ENCODE measurements at regions of chr20 and their contacts with region 1.

Region 1: DNA sequence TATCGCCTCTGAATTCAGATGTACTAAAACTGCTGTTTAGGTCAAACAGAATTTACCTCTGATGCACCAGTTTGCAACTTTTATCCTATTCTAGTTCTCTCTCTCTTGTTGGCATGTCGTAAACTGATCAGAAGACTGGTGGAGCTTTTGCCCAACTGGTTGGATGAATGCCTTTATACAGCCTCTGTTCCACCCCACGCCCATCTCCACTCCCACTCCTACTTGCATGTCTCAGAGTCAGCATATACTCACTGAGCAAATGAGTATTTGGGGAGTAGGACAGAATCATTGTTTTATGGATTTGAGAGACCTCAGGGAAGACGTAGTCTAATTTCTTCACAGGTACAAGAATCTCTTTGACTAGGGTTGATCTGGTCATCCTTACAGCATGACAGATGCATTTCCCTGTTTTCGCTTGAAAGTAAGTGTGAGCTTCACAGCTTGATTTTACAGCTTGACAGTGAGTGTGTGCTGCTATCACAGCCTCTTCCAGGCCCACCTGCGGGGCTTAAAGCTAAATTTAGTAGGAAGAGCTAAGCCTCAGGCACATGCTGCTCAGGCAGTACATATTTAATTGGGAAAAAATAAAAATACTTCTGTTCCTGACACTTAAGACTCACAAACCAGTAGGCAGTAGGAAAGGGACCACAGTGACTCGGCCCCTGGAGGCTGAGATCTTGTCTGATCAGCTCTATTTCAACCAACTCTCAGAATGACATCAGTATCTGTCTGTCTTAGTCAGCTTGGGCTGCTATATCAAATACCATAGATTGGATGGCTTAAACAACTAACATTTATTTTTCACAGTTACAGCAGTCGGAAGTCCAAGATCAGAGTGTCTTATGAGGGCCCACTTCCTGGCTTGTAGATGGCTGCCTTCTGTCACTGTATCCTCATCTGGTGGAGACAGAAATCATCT is 30.4 kb downstream of the TRMT6 start:
- DNase-seq: no peak
- ATAC-seq: no peak
- H3K4me3 ChIP-seq: no peak overlapping the region
- H3K27ac ChIP-seq: no peak overlapping the region
- H3K4me1 ChIP-seq: peaks cover 0 to 10% (median 0%) of the 10 kb centered on the region in 12 donors
- H3K27me3 ChIP-seq: peaks cover 0 to 4% (median 0%) of the 10 kb centered on the region in 9 donors
- CTCF ChIP-seq: no peak
- POLR2A ChIP-seq: no peak

Region 2: GRCh38 chr20:5796331-5797040 is 123.4 kb before region 1 on chr20:
- intact Hi-C with region 1: no loop called
- DNase-seq: no peak
- ATAC-seq: no peak
- H3K4me3 ChIP-seq: no peak overlapping the region
- H3K27ac ChIP-seq: no peak overlapping the region
- H3K4me1 ChIP-seq: no peaks in the 10 kb centered on the region
- H3K27me3 ChIP-seq: no peaks in the 10 kb centered on the region
- CTCF ChIP-seq: no peak
- POLR2A ChIP-seq: no peak

Region 3: DNA sequence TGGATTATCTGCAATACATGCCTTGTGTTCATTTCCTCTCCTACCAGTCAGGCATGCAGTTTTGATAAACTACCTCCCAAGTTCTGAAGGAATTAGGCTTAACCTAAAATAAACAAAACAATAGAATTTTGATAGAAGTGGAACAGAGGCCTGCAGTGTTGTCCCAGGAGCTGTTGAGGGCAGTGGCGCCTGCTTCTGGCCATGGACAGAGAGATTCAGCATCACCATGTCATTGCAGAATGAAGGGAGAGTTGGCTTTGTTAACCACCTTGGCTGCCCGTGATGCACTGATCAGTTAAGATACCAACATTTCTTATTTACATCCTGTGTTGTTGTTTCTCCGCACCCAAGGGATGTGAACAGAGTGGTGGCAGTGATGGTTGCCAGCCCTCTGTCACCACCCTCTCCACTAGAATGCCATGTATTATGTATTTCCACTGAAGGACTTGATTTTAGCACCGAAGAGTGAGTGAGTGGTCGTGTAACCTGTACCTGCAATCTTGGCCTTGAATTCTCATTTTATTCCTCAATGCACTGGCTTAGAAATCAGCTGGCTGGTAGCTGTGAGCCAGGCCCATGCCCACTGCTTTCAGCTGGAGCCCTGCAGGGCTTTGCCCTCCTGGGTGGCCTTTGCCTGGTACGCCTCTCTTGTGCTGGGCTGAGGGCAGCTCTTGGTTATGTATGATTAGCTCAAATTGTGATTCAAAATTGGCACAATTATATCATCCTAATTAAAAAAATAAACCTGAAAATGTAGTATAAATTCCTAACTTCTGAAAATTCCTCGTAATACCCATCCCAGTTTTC is 113.2 kb before region 1 on chr20:
- intact Hi-C with region 1: loop called in 1 of 10 experiments (anchors 10 kb)
- DNase-seq: peak in 1 of 5 donors; percentile 31
- ATAC-seq: peak; percentile 49 to 70 (median 60)
- H3K4me3 ChIP-seq: no peak overlapping the region
- H3K27ac ChIP-seq: no peak overlapping the region
- H3K4me1 ChIP-seq: peaks cover 0 to 24% (median 10%) of the 10 kb centered on the region in 12 donors
- H3K27me3 ChIP-seq: no peaks in the 10 kb centered on the region
- CTCF ChIP-seq: peak in 6 of 12 donors; percentile 9 to 34 (median 20)
- POLR2A ChIP-seq: no peak

Region 4: GRCh38 chr20:5895626-5896025 is 24.3 kb before region 1 on chr20:
- intact Hi-C with region 1: no loop called
- DNase-seq: no peak
- ATAC-seq: no peak
- H3K4me3 ChIP-seq: no peak overlapping the region
- H3K27ac ChIP-seq: no peak overlapping the region
- H3K4me1 ChIP-seq: peaks cover 0 to 6% (median 0%) of the 10 kb centered on the region in 12 donors
- H3K27me3 ChIP-seq: peaks cover 0 to 6% (median 0%) of the 10 kb centered on the region in 9 donors
- CTCF ChIP-seq: no peak
- POLR2A ChIP-seq: no peak

Region 5: GRCh38 chr20:5933802-5934436 is 14.0 kb after region 1 on chr20:
- intact Hi-C with region 1: no loop called
- DNase-seq: no peak
- ATAC-seq: peak; percentile 58 to 78 (median 68)
- H3K4me3 ChIP-seq: no peak overlapping the region
- H3K27ac ChIP-seq: no peak overlapping the region
- H3K4me1 ChIP-seq: no peaks in the 10 kb centered on the region
- H3K27me3 ChIP-seq: no peaks in the 10 kb centered on the region
- CTCF ChIP-seq: peak in 9 of 12 donors; percentile 2 to 44 (median 32)
- POLR2A ChIP-seq: no peak